AG04450 (cell line): ENCODE measurements at regions of chr4 and their contacts with region 1.

Region 1: GRCh38 chr4:40234519-40235039 is 37.7 kb downstream of the RHOH start:
- DNase-seq: no peak
- H3K4me3 ChIP-seq: no peak overlapping the region
- H3K27ac ChIP-seq: no peak overlapping the region
- H3K27me3 ChIP-seq: peaks cover 5% of the 10 kb centered on the region
- CTCF ChIP-seq: no peak

Region 2: GRCh38 chr4:40056716-40057585 is 177.6 kb before region 1 on chr4 and contains the start of gene N4BP2:
- CTCF ChIA-PET with region 1: no interaction called
- POLR2A ChIA-PET with region 1: interaction called, 12 read pairs
- DNase-seq: peak; percentile 38
- H3K4me3 ChIP-seq: peak within 1 kb of the TSS; percentile 79
- H3K27ac ChIP-seq: peak within 1 kb of the TSS; percentile 92
- H3K27me3 ChIP-seq: no peaks in the 10 kb centered on the region
- CTCF ChIP-seq: peak; percentile 62
- polyA plus RNA-seq, gene N4BP2: 3.2 and 5.7 TPM in 2 replicates